CD14-positive monocyte (primary cell): ENCODE measurements at regions of chr18 and their contacts with region 1.

Region 1: DNA sequence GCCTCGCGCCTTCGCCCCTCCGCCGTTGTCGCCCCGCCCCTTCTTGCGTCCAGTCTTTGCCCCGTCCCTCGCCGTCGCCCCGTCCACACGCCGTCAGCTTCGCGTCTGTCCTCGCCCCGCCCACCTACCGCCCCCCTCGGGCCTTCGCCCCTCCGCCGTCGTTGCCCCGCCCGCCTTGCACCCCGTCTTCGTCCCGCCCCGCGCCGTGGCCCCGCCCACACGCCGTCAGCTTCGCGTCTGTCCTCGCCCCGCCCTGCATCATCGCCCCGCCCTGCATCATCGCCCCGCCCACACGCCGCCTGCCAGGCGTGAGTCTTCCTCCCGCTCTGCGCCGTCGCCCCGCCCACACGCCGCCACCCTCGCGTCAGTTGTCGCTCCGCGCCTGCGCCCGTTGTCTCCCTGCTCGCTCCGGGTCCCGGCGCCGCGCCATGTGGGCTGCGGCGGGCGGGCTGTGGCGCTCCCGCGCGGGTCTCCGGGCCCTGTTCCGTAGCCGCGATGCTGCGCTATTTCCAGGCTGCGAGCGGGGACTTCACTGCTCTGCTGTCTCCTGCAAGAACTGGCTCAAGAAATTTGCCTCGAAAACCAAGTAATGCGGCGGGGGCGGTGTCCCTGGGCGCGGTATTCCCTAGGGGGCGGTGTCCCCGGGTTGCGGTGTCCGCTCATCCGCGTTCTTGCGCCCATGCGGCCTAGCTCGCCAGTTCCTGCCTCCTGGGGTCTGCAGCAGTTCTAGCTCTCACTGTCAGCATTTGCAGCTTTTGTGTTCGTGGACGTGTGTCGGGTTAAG is at the start of gene RBFA:
- DNase-seq: peak; percentile 94 to 99 (median 99)
- H3K4me3 ChIP-seq: peak within 1 kb of the TSS; percentile 60 to 94 (median 78)
- H3K4me3 Mint-ChIP-seq: peak within 1 kb of the TSS; percentile 83 to 93
- H3K27ac ChIP-seq: peak within 1 kb of the TSS; percentile 90 to 93
- H3K27ac Mint-ChIP-seq: peak within 1 kb of the TSS; percentile 94 to 99 (median 98)
- H3K4me1 ChIP-seq: peaks cover 18 to 22% of the 10 kb centered on the region in 2 donors
- H3K4me1 Mint-ChIP-seq: peaks cover 24% of the 10 kb centered on the region
- H3K27me3 ChIP-seq: no peaks in the 10 kb centered on the region
- H3K27me3 Mint-ChIP-seq: peaks cover 0 to 2% (median 2%) of the 10 kb centered on the region in 3 donors
- CTCF ChIP-seq: peak; percentile 41
- polyA plus RNA-seq, gene RBFA: 4.0 to 14.7 (median 5.7) TPM

Region 2: DNA sequence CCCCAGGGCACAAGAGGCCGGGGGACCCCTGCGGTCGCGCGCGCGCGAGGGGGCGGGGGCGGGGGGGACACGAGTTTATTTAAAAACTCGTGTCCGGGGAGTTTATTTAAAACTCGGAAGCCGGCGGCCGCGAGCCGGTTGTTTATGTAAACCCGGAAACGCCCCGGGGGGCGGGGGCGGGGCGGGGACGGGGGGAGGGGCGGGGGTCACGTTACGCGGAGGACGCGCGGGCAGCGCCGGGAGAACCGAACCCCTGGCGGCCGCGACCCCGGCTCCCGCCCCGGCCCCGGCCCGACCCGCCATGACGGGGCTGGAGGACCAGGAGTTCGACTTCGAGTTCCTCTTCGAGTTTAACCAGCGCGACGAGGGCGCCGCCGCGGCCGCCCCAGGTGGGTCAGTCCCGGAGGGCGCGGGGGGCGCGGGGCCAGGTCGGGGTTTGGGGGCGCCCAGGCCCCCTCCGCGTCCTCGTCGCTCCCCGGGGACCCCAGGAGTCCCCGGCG is 634.1 kb before region 1 on chr18:
- intact Hi-C with region 1: loop called in 1 of 2 experiments (anchors 10 kb)
- DNase-seq: peak in 2 of 3 donors; percentile 36 to 39
- H3K4me3 ChIP-seq: peak overlapping the region; percentile 56 to 77 (median 59)
- H3K4me3 Mint-ChIP-seq: peak overlapping the region in 1 of 2 donors; percentile 58
- H3K27ac ChIP-seq: peak overlapping the region in 1 of 2 donors; percentile 70
- H3K27ac Mint-ChIP-seq: no peak overlapping the region
- H3K4me1 ChIP-seq: peaks cover 55 to 69% of the 10 kb centered on the region in 2 donors
- H3K4me1 Mint-ChIP-seq: peaks cover 48% of the 10 kb centered on the region
- H3K27me3 ChIP-seq: peaks cover 8 to 31% of the 10 kb centered on the region in 2 donors
- H3K27me3 Mint-ChIP-seq: peaks cover 30 to 43% (median 36%) of the 10 kb centered on the region in 3 donors
- CTCF ChIP-seq: no peak

Region 3: GRCh38 chr18:79951578-79952455 is 82.4 kb before region 1 on chr18 and contains the start of gene SLC66A2:
- intact Hi-C with region 1: loop called (anchors 5 kb)
- DNase-seq: peak; percentile 83 to 90 (median 89)
- H3K4me3 ChIP-seq: peak within 1 kb of the TSS; percentile 66 to 98 (median 82)
- H3K4me3 Mint-ChIP-seq: peak within 1 kb of the TSS; percentile 87 to 91
- H3K27ac ChIP-seq: peak within 1 kb of the TSS; percentile 64 to 80
- H3K27ac Mint-ChIP-seq: peak within 1 kb of the TSS; percentile 85 to 94 (median 93)
- H3K4me1 ChIP-seq: peaks cover 29 to 41% of the 10 kb centered on the region in 2 donors
- H3K4me1 Mint-ChIP-seq: peaks cover 39% of the 10 kb centered on the region
- H3K27me3 ChIP-seq: peaks cover 0 to 2% of the 10 kb centered on the region in 2 donors
- H3K27me3 Mint-ChIP-seq: peaks cover 4 to 14% (median 8%) of the 10 kb centered on the region in 3 donors
- CTCF ChIP-seq: no peak
- polyA plus RNA-seq, gene SLC66A2: 26.8 to 42.6 (median 33.8) TPM

Region 4: GRCh38 chr18:80096032-80096565 is 61.8 kb after region 1 on chr18:
- intact Hi-C with region 1: no loop called
- DNase-seq: no peak
- H3K4me3 ChIP-seq: no peak overlapping the region
- H3K4me3 Mint-ChIP-seq: no peak overlapping the region
- H3K27ac ChIP-seq: no peak overlapping the region
- H3K27ac Mint-ChIP-seq: peak overlapping the region in 1 of 7 donors; percentile 28
- H3K4me1 ChIP-seq: no peaks in the 10 kb centered on the region
- H3K4me1 Mint-ChIP-seq: no peaks in the 10 kb centered on the region
- H3K27me3 ChIP-seq: no peaks in the 10 kb centered on the region
- H3K27me3 Mint-ChIP-seq: peaks cover 0 to 4% (median 1%) of the 10 kb centered on the region in 3 donors
- CTCF ChIP-seq: no peak

Region 5: GRCh38 chr18:80108728-80109675 is 74.7 kb after region 1 on chr18 and contains the start of gene ADNP2:
- intact Hi-C with region 1: loop called in 1 of 2 experiments (anchors 5 kb)
- DNase-seq: peak; percentile 88 to 95 (median 91)
- H3K4me3 ChIP-seq: peak within 1 kb of the TSS; percentile 62 to 82 (median 81)
- H3K4me3 Mint-ChIP-seq: peak within 1 kb of the TSS; percentile 88
- H3K27ac ChIP-seq: peak within 1 kb of the TSS; percentile 51 to 63
- H3K27ac Mint-ChIP-seq: peak within 1 kb of the TSS; percentile 72 to 93 (median 90)
- H3K4me1 ChIP-seq: peaks cover 11 to 17% of the 10 kb centered on the region in 2 donors
- H3K4me1 Mint-ChIP-seq: peaks cover 24% of the 10 kb centered on the region
- H3K27me3 ChIP-seq: no peaks in the 10 kb centered on the region
- H3K27me3 Mint-ChIP-seq: peaks cover 0 to 4% (median 2%) of the 10 kb centered on the region in 3 donors
- CTCF ChIP-seq: no peak
- polyA plus RNA-seq, gene ADNP2: 3.0 to 5.6 (median 3.6) TPM

Region 6: DNA sequence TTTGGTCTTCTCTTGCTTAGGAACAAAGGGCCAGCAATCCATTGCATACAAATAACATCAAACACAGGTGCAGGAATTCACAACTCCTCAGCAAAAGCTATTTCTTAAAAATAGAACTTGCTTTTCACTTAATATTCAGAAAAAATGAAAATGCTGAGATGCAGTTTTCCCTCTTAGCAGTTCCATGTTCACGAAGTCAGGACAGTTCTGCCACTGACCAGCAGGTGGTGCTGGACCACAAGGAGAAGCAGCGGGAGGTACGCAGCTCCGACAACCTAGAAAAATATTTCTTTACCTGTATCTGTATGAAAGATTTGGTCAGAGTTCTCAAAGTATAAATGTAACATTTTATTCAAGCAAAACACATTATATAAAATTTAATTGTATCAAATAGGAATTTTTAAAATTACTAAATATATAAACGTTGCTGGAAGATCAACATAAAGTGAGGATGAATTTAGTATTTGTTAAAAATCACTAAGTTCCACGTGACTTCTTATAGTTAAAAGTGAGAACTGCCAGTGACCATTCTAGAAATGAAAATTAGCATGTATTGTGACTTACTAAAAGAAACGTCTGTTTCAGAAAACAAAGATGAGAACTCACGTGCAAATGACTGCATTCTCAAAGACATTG is 123.6 kb after region 1 on chr18:
- intact Hi-C with region 1: loop called (anchors 5 to 10 kb)
- DNase-seq: peak; percentile 38 to 51 (median 42)
- H3K4me3 ChIP-seq: no peak overlapping the region
- H3K4me3 Mint-ChIP-seq: peak overlapping the region in 1 of 2 donors; percentile 46
- H3K27ac ChIP-seq: no peak overlapping the region
- H3K27ac Mint-ChIP-seq: no peak overlapping the region
- H3K4me1 ChIP-seq: peaks cover 6 to 10% of the 10 kb centered on the region in 2 donors
- H3K4me1 Mint-ChIP-seq: peaks cover 2% of the 10 kb centered on the region
- H3K27me3 ChIP-seq: peaks cover 0 to 18% of the 10 kb centered on the region in 2 donors
- H3K27me3 Mint-ChIP-seq: peaks cover 7 to 36% (median 22%) of the 10 kb centered on the region in 3 donors
- CTCF ChIP-seq: peak; percentile 96